Ascending aorta (tissue), 2 donors: ENCODE measurements at regions of chr14 and their contacts with region 1.

Region 1: DNA sequence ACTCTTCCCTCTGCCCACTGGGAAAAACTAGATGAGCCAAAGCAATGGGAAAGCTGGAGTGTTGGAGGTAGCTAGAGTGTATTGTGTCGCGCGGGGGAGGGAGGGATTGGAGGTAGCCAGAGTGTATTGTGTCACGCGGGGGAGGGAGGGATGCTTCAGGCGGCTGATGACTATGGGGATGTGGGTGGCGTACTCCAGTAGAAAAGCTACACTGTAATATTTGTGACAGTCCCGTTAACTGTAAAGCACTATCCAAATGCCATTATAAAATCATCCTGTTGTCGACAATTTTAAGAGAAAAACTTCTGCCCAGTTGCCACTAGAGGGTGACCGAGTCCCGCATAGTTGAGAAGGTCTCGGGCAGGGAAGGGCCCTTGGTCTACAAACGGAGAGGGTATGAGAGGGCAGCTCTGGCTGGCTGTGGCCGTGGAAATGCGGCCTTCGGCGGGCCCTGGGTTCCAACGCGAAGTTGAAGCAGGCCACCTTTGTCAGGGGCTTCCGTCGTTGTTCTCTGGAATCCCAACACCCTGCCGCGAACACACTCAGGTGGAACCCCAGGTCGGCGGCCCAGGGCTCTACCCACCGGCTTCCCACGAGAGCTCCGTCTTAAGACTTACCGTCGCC is 15.1 kb upstream of the PLEK2 start:
- DNase-seq: peak in 1 of 2 donors; percentile 80
- H3K4me3 ChIP-seq: no peak overlapping the region
- H3K27ac ChIP-seq: no peak overlapping the region
- H3K4me1 ChIP-seq: no peaks in the 10 kb centered on the region
- H3K27me3 ChIP-seq: no peaks in the 10 kb centered on the region
- CTCF ChIP-seq: peak; percentile 56 to 77 (median 64)

Region 2: DNA sequence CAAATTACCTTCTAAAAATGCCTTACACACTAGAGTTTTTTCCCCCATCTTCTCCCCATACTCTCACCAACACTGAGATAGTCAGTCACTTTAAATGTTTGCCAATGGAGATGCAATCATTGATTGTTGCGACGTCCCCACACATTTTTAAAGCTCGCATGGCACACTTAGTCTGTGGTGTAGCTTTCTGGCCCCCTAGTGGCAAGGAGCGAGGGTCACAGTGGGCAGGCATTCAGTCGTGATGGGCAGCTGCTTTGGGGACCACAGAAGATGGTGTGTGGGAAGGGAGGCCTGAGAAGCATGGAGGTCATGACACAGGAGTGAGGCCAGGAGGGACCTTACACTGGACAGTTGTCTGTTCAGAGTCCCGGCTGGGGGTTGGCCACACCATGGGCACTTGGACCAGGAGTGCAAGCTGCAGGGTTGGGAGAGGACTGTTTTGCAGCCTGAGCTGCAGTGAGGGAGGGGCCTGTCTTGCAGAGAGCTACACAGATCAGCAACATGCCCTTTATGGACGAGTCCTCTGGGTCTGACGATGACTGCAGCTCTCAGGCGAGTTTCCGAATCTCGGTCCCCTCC is 144.3 kb after region 1 on chr14:
- intact Hi-C with region 1: loop called (anchors 1 kb)
- DNase-seq: peak in 1 of 2 donors; percentile 70
- H3K4me3 ChIP-seq: no peak overlapping the region
- H3K27ac ChIP-seq: no peak overlapping the region
- H3K4me1 ChIP-seq: no peaks in the 10 kb centered on the region
- H3K27me3 ChIP-seq: no peaks in the 10 kb centered on the region
- CTCF ChIP-seq: peak; percentile 63 to 75 (median 64)